ENCODE measurements at regions of chr20 and their contacts with region 1.

Region 1: GRCh38 chr20:2446845-2447244 is 23.7 kb downstream of the SNRPB start:
- DNase-seq: no peak
- H3K27ac ChIP-seq: no peak overlapping the region
- CTCF ChIP-seq: no peak

Region 2: DNA sequence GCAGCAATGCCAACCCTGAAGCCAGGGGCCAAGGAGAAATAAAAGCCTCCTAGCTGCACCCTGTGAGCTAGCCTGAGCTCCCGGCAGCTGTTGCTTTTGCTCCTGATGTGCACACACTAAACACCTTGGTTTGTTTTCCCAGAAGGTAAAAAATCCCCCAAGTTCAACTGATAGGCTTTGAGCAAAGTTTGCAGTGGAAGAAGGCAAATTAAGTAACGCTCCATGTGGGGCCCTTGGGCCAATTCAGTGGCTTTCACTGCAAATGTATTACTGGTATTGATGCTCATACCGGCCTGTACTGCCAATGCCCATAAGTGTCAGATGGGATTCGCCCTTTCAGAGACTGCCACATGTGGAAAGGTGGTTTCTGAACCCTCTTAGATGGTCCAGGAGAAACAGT is 226.6 kb after region 1 on chr20:
- CTCF ChIA-PET with region 1: interaction called, 10 read pairs
- POLR2A ChIA-PET with region 1: no interaction called
- DNase-seq: no peak
- H3K27ac ChIP-seq: no peak overlapping the region
- CTCF ChIP-seq: no peak